Left ventricle myocardium inferior (tissue), 1 donor: ENCODE measurements at regions of chr11 and their contacts with region 1.

Region 1: GRCh38 chr11:65274735-65275682 is 13.2 kb downstream of the POLA2 start:
- DNase-seq: peak; percentile 60
- H3K4me3 ChIP-seq: no peak overlapping the region
- H3K27ac ChIP-seq: peak overlapping the region; percentile 71
- H3K4me1 ChIP-seq: peaks cover 25% of the 10 kb centered on the region
- H3K27me3 ChIP-seq: no peaks in the 10 kb centered on the region
- CTCF ChIP-seq: peak; percentile 83

Region 2: GRCh38 chr11:64814712-64815187 is 460.3 kb before region 1 on chr11:
- intact Hi-C with region 1: no loop called
- DNase-seq: no peak
- H3K4me3 ChIP-seq: no peak overlapping the region
- H3K27ac ChIP-seq: no peak overlapping the region
- H3K4me1 ChIP-seq: peaks cover 6% of the 10 kb centered on the region
- H3K27me3 ChIP-seq: no peaks in the 10 kb centered on the region
- CTCF ChIP-seq: no peak

Region 3: DNA sequence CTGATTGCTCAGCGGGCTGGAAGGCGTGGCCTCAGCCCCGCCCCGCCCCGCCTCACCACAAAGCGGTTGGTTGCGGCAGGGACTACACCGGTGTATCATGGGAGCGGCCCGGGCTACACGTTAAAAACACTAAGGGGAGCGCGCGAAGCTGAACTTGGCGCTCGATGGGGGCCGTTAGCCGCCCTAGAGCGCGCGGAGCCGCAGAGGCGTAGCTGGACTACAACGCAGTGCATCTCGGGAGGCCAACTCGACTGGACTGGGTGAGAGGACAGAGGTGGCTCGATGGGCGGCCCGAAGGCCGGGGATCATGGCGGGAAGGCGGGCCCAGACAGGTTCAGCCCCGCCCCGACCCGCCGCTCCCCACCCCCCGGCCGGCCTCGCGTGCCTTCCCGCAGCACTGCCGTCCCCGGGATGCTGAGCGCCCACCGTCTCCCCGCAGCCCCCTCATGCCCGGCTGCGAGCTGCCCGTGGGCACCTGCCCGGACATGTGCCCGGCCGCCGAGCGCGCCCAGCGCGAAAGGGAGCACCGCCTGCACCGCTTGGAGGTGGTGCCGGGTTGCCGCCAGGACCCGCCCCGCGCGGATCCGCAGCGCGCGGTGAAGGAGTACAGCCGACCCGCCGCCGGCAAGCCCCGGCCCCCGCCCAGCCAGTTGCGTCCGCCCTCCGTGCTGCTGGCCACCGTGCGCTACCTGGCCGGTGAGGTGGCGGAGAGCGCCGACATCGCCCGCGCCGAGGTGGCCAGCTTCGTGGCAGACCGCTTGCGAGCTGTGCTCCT is 234.0 kb before region 1 on chr11 and contains the start of gene SAC3D1:
- intact Hi-C with region 1: no loop called
- DNase-seq: peak; percentile 89
- H3K4me3 ChIP-seq: peak within 1 kb of the TSS; percentile 96
- H3K27ac ChIP-seq: peak within 1 kb of the TSS; percentile 98
- H3K4me1 ChIP-seq: peaks cover 49% of the 10 kb centered on the region
- H3K27me3 ChIP-seq: no peaks in the 10 kb centered on the region
- CTCF ChIP-seq: no peak
- total RNA-seq, gene SAC3D1: 5.6 TPM

Region 4: GRCh38 chr11:65314501-65315203 is 39.6 kb after region 1 on chr11 and contains the start of gene CDC42EP2:
- intact Hi-C with region 1: loop called (anchors 5 kb)
- DNase-seq: peak; percentile 91
- H3K4me3 ChIP-seq: peak within 1 kb of the TSS; percentile 90
- H3K27ac ChIP-seq: peak within 1 kb of the TSS; percentile 98
- H3K4me1 ChIP-seq: peaks cover 89% of the 10 kb centered on the region
- H3K27me3 ChIP-seq: no peaks in the 10 kb centered on the region
- CTCF ChIP-seq: no peak
- total RNA-seq, gene CDC42EP2: 11.3 TPM

Region 5: DNA sequence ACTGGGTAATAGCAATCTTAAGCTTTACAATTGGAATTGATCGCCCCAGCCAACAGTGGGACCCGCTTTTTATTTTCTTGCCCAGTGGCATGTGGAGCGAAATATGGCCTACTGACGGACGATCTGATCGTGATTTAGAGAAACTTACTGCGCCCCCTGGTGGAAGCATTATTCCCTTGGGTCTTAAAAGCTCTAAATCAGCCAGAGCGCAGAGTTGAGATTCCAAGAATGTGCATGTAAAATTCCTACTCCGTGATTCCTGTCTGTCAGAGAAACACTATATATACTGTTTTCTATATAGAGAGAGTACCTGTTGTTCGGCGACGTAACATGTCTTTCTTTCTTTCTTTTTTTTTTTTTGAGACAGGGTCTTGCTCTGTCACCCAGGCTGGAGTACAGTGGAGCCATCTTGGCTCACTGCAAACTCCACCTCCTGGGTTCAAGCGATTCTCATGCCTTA is 55.0 kb after region 1 on chr11:
- intact Hi-C with region 1: loop called (anchors 5 kb)
- DNase-seq: peak; percentile 72
- H3K4me3 ChIP-seq: no peak overlapping the region
- H3K27ac ChIP-seq: peak overlapping the region; percentile 1
- H3K4me1 ChIP-seq: peaks cover 28% of the 10 kb centered on the region
- H3K27me3 ChIP-seq: no peaks in the 10 kb centered on the region
- CTCF ChIP-seq: peak; percentile 84

Region 6: DNA sequence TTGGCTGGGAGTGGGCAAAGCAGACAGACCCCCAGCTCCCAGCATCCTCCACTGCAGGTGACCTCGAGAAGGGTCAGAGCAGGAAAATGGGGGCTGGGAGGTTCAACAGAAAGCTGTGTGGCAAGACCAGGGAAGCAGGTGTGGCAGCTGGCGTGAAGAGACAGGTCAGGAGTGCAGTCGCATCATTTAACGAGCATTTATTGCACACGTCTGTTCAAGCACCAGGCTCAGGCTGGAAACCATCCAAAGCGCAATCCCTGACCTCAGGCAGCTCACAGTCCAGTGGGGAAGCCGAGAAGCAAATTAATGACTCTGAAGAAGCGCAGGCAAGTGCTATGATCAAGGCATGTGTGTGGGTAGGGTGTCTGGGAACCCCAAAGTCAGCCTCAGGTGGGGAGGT is 100.0 kb after region 1 on chr11:
- intact Hi-C with region 1: no loop called
- DNase-seq: no peak
- H3K4me3 ChIP-seq: no peak overlapping the region
- H3K27ac ChIP-seq: no peak overlapping the region
- H3K4me1 ChIP-seq: peaks cover 34% of the 10 kb centered on the region
- H3K27me3 ChIP-seq: no peaks in the 10 kb centered on the region
- CTCF ChIP-seq: no peak